ENCODE measurements at regions of chr12 and their contacts with region 1.

Region 1: GRCh38 chr12:59431266-59431665 is 164.6 kb upstream of the SLC16A7 start:
- DNase-seq: peak in 2 of 9 donors; percentile 6 to 7
- ATAC-seq: no peak
- H3K4me3 ChIP-seq: no peak overlapping the region
- H3K4me3 Mint-ChIP-seq: no peak overlapping the region
- H3K27ac ChIP-seq: no peak overlapping the region
- H3K27ac Mint-ChIP-seq: no peak overlapping the region
- H3K4me1 ChIP-seq: no peaks in the 10 kb centered on the region
- H3K4me1 Mint-ChIP-seq: no peaks in the 10 kb centered on the region
- H3K27me3 ChIP-seq: no peaks in the 10 kb centered on the region
- H3K27me3 Mint-ChIP-seq: peaks cover 0 to 6% (median 0%) of the 10 kb centered on the region in 5 donors

Region 2: GRCh38 chr12:58288190-58288589 is 1143.1 kb before region 1 on chr12:
- CTCF ChIA-PET with region 1: no interaction called
- POLR2A ChIA-PET with region 1: no interaction called
- intact Hi-C with region 1: no loop called
- DNase-seq: no peak
- ATAC-seq: no peak
- H3K4me3 ChIP-seq: no peak overlapping the region
- H3K4me3 Mint-ChIP-seq: no peak overlapping the region
- H3K27ac ChIP-seq: no peak overlapping the region
- H3K27ac Mint-ChIP-seq: no peak overlapping the region
- H3K4me1 ChIP-seq: no peaks in the 10 kb centered on the region
- H3K4me1 Mint-ChIP-seq: peaks cover 0 to 7% (median 0%) of the 10 kb centered on the region in 7 donors
- H3K27me3 ChIP-seq: no peaks in the 10 kb centered on the region
- H3K27me3 Mint-ChIP-seq: peaks cover 2 to 20% (median 18%) of the 10 kb centered on the region in 5 donors

Region 3: DNA sequence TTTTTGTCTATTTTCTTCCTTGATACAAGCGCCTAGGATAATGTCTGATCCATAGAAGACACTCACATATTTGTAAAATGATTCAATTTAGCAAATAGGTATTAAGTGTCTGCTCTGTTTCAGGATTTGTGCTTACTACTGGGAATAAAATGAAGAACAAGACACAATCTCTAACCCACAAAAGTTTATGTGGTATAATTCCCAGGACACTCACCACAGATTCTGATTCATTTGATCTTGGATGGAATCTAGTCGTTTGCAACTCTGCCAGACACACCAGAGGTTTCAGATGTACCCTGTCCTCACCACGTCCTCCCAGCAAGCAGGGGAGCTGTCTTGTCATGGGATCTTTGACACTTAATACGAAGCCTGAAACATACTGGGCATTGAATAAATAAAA is 719.3 kb before region 1 on chr12:
- CTCF ChIA-PET with region 1: no interaction called
- POLR2A ChIA-PET with region 1: no interaction called
- intact Hi-C with region 1: no loop called
- DNase-seq: no peak
- ATAC-seq: no peak
- H3K4me3 ChIP-seq: no peak overlapping the region
- H3K4me3 Mint-ChIP-seq: no peak overlapping the region
- H3K27ac ChIP-seq: no peak overlapping the region
- H3K27ac Mint-ChIP-seq: no peak overlapping the region
- H3K4me1 ChIP-seq: no peaks in the 10 kb centered on the region
- H3K4me1 Mint-ChIP-seq: no peaks in the 10 kb centered on the region
- H3K27me3 ChIP-seq: no peaks in the 10 kb centered on the region
- H3K27me3 Mint-ChIP-seq: no peaks in the 10 kb centered on the region

Region 4: DNA sequence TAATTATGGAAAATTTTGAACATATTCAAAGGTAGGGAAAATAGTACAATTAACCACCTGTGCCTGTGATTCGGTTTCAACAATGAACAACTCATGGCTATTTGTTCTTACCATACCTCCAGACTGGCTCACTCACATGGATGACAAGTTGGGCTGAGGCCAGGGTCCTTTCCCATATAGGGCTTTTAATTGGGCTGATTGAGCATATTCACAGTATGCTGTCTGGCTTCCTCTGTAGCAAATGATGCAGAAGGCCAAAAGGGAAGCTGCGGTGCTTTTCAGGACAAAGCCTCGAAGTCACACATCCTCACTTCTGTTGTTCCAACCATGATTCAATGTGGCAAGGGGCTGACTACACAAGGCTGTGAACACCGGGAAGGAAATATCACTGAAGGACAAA is 133.0 kb before region 1 on chr12:
- CTCF ChIA-PET with region 1: no interaction called
- POLR2A ChIA-PET with region 1: no interaction called
- intact Hi-C with region 1: no loop called
- DNase-seq: no peak
- ATAC-seq: no peak
- H3K4me3 ChIP-seq: no peak overlapping the region
- H3K4me3 Mint-ChIP-seq: no peak overlapping the region
- H3K27ac ChIP-seq: no peak overlapping the region
- H3K27ac Mint-ChIP-seq: no peak overlapping the region
- H3K4me1 ChIP-seq: no peaks in the 10 kb centered on the region
- H3K4me1 Mint-ChIP-seq: no peaks in the 10 kb centered on the region
- H3K27me3 ChIP-seq: no peaks in the 10 kb centered on the region
- H3K27me3 Mint-ChIP-seq: peaks cover 0 to 15% (median 0%) of the 10 kb centered on the region in 5 donors

Region 5: DNA sequence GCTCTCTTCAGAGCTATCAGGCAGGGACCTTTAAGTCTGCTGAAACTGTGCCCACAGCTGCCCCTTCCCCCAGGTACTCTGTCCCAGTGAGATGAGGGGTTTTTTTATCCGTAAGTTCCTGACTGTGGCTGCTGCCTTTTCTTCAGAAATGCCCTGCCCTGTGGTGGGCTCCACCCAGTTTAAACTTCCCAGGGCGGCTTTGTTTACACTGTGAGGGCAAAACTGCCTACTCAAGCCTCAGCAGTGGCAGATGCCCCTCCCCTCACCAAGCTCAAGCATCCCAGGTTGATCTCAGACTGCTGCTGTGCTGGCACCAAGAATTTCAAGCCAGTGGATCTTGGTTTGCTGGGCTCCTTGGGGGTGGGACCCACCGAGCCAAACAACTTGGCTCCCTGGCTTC is 117.7 kb after region 1 on chr12:
- CTCF ChIA-PET with region 1: no interaction called
- POLR2A ChIA-PET with region 1: no interaction called
- intact Hi-C with region 1: loop called in 1 of 2 experiments (anchors 10 kb)
- DNase-seq: peak in 5 of 9 donors; percentile 2 to 32 (median 10)
- ATAC-seq: peak; percentile 46
- H3K4me3 ChIP-seq: no peak overlapping the region
- H3K4me3 Mint-ChIP-seq: peak overlapping the region in 1 of 10 donors; percentile 44
- H3K27ac ChIP-seq: no peak overlapping the region
- H3K27ac Mint-ChIP-seq: no peak overlapping the region
- H3K4me1 ChIP-seq: no peaks in the 10 kb centered on the region
- H3K4me1 Mint-ChIP-seq: peaks cover 0 to 27% (median 23%) of the 10 kb centered on the region in 7 donors
- H3K27me3 ChIP-seq: no peaks in the 10 kb centered on the region
- H3K27me3 Mint-ChIP-seq: peaks cover 0 to 3% (median 0%) of the 10 kb centered on the region in 5 donors

Region 6: GRCh38 chr12:59808317-59808910 is 377.1 kb after region 1 on chr12:
- CTCF ChIA-PET with region 1: interaction called, 10 read pairs
- POLR2A ChIA-PET with region 1: no interaction called
- intact Hi-C with region 1: loop called in 1 of 2 experiments (anchors 1 kb)
- DNase-seq: peak in 6 of 9 donors; percentile 16 to 44 (median 34)
- ATAC-seq: peak; percentile 81
- H3K4me3 ChIP-seq: no peak overlapping the region
- H3K4me3 Mint-ChIP-seq: no peak overlapping the region
- H3K27ac ChIP-seq: no peak overlapping the region
- H3K27ac Mint-ChIP-seq: no peak overlapping the region
- H3K4me1 ChIP-seq: no peaks in the 10 kb centered on the region
- H3K4me1 Mint-ChIP-seq: peaks cover 0 to 5% (median 0%) of the 10 kb centered on the region in 7 donors
- H3K27me3 ChIP-seq: no peaks in the 10 kb centered on the region
- H3K27me3 Mint-ChIP-seq: no peaks in the 10 kb centered on the region

Region 7: DNA sequence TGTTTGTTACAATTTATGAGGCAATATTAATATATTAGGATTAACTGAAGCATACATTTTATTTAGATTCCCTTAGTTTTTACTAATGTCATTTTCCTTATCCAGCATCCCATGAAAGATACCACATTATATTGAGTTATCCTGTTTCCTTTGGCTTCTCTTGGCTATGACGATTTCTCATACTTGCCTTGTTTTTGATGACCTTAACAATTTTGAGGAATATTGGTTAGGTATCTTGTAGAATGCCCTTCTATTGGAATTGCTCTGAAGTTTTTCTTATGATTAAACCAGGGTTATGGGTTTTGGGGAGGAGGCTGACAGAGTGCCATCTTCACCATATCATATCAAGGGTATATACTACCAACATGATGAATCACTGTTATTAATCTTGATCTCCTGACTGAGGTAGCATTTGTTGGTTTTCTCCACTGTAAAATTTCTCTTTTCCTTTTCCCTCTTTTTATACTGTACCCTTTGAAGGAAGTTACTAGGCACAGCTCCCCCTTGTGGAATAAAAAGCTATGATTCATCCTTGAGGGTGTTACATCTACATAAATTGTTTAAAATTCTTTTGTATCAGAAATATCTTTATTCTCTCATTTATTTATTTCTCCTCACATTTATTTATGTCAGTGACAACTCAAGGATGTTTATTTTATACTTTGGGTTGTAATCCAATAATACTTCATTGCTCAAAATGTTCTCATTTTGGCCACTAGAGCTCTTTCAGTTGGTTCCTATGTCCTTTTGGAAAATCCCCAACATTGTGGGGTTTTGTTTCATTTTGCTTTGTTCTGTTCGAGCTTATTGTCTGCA is 403.6 kb after region 1 on chr12:
- CTCF ChIA-PET with region 1: no interaction called
- POLR2A ChIA-PET with region 1: no interaction called
- intact Hi-C with region 1: loop called in 1 of 2 experiments (anchors 1 kb)
- DNase-seq: peak in 6 of 9 donors; percentile 4 to 25 (median 20)
- ATAC-seq: peak; percentile 37
- H3K4me3 ChIP-seq: no peak overlapping the region
- H3K4me3 Mint-ChIP-seq: no peak overlapping the region
- H3K27ac ChIP-seq: no peak overlapping the region
- H3K27ac Mint-ChIP-seq: no peak overlapping the region
- H3K4me1 ChIP-seq: no peaks in the 10 kb centered on the region
- H3K4me1 Mint-ChIP-seq: no peaks in the 10 kb centered on the region
- H3K27me3 ChIP-seq: no peaks in the 10 kb centered on the region
- H3K27me3 Mint-ChIP-seq: peaks cover 0 to 17% (median 11%) of the 10 kb centered on the region in 5 donors